Mammary epithelial cell (primary cell): ENCODE measurements at regions of chr18 and their contacts with region 1.

Region 1: DNA sequence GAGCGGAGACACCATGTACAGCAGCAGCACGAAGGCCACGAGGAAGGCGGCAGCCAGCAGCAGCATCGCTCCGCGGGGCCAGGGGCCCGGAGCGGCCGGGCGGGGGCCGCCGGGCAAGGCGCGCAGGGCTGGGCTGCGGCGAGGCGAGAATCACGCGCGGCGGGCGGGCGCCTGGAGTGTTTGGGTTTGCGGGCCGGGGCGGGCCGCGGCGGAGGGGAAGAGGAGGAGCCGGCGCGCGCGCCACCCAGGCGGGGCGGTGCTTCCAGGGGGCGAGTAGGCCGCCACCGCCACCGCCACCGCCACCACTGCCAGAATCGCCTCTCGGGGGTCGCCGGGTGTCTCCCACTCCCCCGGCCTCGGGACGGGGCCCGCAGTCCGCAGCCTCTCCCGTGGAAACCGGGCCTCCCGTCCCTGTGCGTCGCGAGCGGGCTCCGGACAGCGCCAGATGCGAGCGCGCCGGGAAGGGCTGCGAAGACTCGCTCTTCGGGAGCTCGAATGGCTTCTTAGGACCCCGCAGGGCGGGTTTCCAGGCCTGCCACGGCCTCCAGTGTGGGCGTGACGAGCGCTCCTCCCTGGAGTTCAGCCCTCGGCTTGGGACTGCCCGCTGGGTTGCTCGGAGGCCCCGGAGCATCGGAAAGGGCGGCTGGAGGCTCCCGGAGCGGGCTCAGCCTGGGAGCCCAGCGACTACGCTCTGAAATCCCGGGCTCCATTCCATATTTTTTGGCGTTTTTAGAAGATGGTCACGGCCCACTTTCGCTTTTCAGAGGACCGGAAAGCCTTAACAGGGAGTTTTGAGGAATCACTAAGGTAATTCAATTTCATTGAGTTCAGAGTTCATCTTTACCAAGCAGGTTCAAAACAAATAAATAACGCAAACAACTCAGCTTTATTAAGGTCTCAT is at the start of gene KDSR:
- DNase-seq: peak; percentile 99
- H3K4me3 ChIP-seq: peak within 1 kb of the TSS; percentile 72 to 92 (median 87)
- H3K27ac ChIP-seq: peak within 1 kb of the TSS; percentile 81
- H3K4me1 ChIP-seq: peaks cover 15% of the 10 kb centered on the region
- H3K27me3 ChIP-seq: no peaks in the 10 kb centered on the region
- CTCF ChIP-seq: no peak
- total RNA-seq, gene KDSR: 65.7 to 101 TPM

Region 2: DNA sequence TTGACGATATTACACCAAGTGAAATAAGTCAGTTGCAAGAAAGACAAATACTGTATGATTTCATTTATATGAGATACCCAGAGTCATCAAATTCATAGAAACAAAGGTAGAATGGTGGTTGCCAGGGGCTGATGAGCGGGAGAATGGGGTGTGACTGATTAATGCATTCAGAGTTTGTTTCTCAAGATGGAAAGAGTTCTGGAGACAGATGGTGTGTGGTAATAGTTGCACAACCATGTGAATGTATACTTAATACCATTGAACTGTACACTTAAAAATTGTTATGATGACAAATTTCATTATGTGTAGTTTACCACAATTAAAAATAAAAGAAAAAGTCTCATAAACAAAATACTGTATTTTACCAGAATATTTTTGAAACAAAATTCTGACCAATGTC is 1297.7 kb before region 1 on chr18:
- CTCF ChIA-PET with region 1: no interaction called
- dilution Hi-C with region 1: no loop called
- in situ Hi-C with region 1: no loop called
- intact Hi-C with region 1: no loop called
- DNase-seq: peak; percentile 13
- H3K4me3 ChIP-seq: no peak overlapping the region
- H3K27ac ChIP-seq: no peak overlapping the region
- H3K4me1 ChIP-seq: no peaks in the 10 kb centered on the region
- H3K27me3 ChIP-seq: no peaks in the 10 kb centered on the region
- CTCF ChIP-seq: no peak

Region 3: GRCh38 chr18:62938487-62938886 is 428.8 kb before region 1 on chr18:
- CTCF ChIA-PET with region 1: no interaction called
- dilution Hi-C with region 1: no loop called
- in situ Hi-C with region 1: no loop called
- intact Hi-C with region 1: no loop called
- DNase-seq: no peak
- H3K4me3 ChIP-seq: no peak overlapping the region
- H3K27ac ChIP-seq: no peak overlapping the region
- H3K4me1 ChIP-seq: peaks cover 12% of the 10 kb centered on the region
- H3K27me3 ChIP-seq: no peaks in the 10 kb centered on the region
- CTCF ChIP-seq: no peak

Region 4: DNA sequence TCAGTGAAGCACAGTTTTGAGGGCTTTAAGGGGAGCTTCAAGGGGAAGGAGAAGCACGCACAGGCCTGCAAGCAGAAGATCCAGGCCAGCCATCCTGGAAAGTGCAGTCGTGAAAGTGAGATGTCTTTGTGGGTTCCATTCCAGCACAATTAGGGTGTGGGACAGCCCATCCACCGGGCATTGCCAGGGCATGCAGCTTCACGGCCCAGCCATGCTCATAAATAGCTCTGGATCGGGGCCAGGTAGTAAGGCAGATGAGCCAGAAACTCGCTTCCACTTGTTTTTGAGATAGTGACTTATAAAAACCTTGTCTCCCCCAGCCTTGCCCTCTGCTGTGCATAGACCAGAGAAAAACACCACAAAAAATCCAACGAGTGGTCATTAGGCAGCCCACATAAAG is 21.3 kb before region 1 on chr18:
- CTCF ChIA-PET with region 1: interaction called, 8 read pairs
- dilution Hi-C with region 1: no loop called
- in situ Hi-C with region 1: no loop called
- intact Hi-C with region 1: loop called (anchors 1 kb)
- DNase-seq: peak; percentile 90
- H3K4me3 ChIP-seq: peak overlapping the region in 1 of 3 experiments; percentile 3
- H3K27ac ChIP-seq: peak overlapping the region; percentile 86
- H3K4me1 ChIP-seq: peaks cover 34% of the 10 kb centered on the region
- H3K27me3 ChIP-seq: no peaks in the 10 kb centered on the region
- CTCF ChIP-seq: no peak

Region 5: DNA sequence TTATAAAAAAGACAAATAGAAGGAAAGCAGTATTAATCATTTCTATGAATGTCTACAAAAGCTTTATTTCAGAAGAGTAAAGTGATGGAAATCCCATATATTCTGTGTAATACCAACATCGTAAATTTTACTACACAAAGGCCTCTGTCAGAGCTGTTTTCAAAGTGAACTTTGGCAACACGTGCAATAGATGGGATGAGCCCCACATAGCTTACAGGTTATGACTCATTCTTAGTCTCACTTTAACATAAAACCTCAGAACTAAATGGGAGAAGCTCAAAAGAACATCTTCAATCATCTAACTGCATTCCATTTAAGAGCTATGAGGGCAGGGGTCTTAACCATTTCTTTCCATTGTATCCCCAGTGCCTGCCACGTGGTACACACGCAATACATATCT is 43.5 kb after region 1 on chr18:
- CTCF ChIA-PET with region 1: no interaction called
- dilution Hi-C with region 1: loop called (anchors 5 kb)
- in situ Hi-C with region 1: no loop called
- intact Hi-C with region 1: no loop called
- DNase-seq: peak; percentile 80
- H3K4me3 ChIP-seq: no peak overlapping the region
- H3K27ac ChIP-seq: peak overlapping the region; percentile 73
- H3K4me1 ChIP-seq: peaks cover 42% of the 10 kb centered on the region
- H3K27me3 ChIP-seq: no peaks in the 10 kb centered on the region
- CTCF ChIP-seq: no peak

Region 6: GRCh38 chr18:63422087-63422809 is 54.9 kb after region 1 on chr18 and contains the start of gene VPS4B:
- CTCF ChIA-PET with region 1: no interaction called
- dilution Hi-C with region 1: no loop called
- in situ Hi-C with region 1: no loop called
- intact Hi-C with region 1: loop called (anchors 1 kb)
- DNase-seq: peak; percentile 99
- H3K4me3 ChIP-seq: peak within 1 kb of the TSS; percentile 90 to 96 (median 94)
- H3K27ac ChIP-seq: peak within 1 kb of the TSS; percentile 99
- H3K4me1 ChIP-seq: peaks cover 33% of the 10 kb centered on the region
- H3K27me3 ChIP-seq: no peaks in the 10 kb centered on the region
- CTCF ChIP-seq: no peak
- total RNA-seq, gene VPS4B: 60.8 to 94.4 TPM

Region 7: GRCh38 chr18:63457987-63458386 is 90.7 kb after region 1 on chr18:
- CTCF ChIA-PET with region 1: no interaction called
- dilution Hi-C with region 1: no loop called
- in situ Hi-C with region 1: no loop called
- intact Hi-C with region 1: no loop called
- DNase-seq: peak; percentile 64
- H3K4me3 ChIP-seq: no peak overlapping the region
- H3K27ac ChIP-seq: peak overlapping the region; percentile 11
- H3K4me1 ChIP-seq: peaks cover 22% of the 10 kb centered on the region
- H3K27me3 ChIP-seq: no peaks in the 10 kb centered on the region
- CTCF ChIP-seq: no peak